Mammary epithelial cell (primary cell): ENCODE measurements at regions of chr17 and their contacts with region 1.

Region 1: DNA sequence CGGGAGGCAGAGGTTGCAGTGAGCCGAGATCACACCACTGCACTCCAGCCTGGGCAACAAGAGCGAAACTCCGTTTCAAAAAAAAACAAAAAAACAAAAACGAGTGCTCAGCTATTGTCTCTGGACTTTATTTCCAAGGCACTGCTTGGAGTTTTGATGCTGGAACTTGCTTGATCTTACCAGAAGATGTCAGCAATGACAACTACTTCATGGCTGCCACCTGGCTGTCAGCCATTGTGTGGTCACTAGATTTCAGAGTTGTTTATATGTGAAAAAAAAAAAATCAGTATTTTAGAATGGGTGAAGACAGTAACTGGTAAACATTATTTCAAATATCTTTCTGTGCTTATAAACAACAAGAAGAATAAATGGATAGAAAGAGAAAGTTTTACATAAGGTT is 26.3 kb upstream of the OR4D1 start:
- DNase-seq: peak; percentile 20
- H3K4me3 ChIP-seq: no peak overlapping the region
- H3K27ac ChIP-seq: no peak overlapping the region
- H3K4me1 ChIP-seq: no peaks in the 10 kb centered on the region
- H3K27me3 ChIP-seq: peaks cover 1% of the 10 kb centered on the region
- CTCF ChIP-seq: peak; percentile 33 to 58

Region 2: GRCh38 chr17:58084317-58084981 is 37.5 kb before region 1 on chr17:
- CTCF ChIA-PET with region 1: no interaction called
- dilution Hi-C with region 1: no loop called
- in situ Hi-C with region 1: no loop called
- intact Hi-C with region 1: no loop called
- DNase-seq: peak; percentile 44
- H3K4me3 ChIP-seq: peak overlapping the region; percentile 70 to 90 (median 84)
- H3K27ac ChIP-seq: peak overlapping the region; percentile 16
- H3K4me1 ChIP-seq: peaks cover 10% of the 10 kb centered on the region
- H3K27me3 ChIP-seq: no peaks in the 10 kb centered on the region
- CTCF ChIP-seq: peak; percentile 14 to 38

Region 3: GRCh38 chr17:58249270-58250133 is 127.6 kb after region 1 on chr17:
- CTCF ChIA-PET with region 1: no interaction called
- dilution Hi-C with region 1: no loop called
- in situ Hi-C with region 1: no loop called
- intact Hi-C with region 1: loop called (anchors 10 kb)
- DNase-seq: peak; percentile 32
- H3K4me3 ChIP-seq: peak overlapping the region; percentile 10 to 62 (median 53)
- H3K27ac ChIP-seq: no peak overlapping the region
- H3K4me1 ChIP-seq: peaks cover 8% of the 10 kb centered on the region
- H3K27me3 ChIP-seq: peaks cover 6% of the 10 kb centered on the region
- CTCF ChIP-seq: peak; percentile 78 to 89